Right ventricle myocardium inferior (tissue), 1 donor: ENCODE measurements at regions of chr1 and their contacts with region 1.

Region 1: DNA sequence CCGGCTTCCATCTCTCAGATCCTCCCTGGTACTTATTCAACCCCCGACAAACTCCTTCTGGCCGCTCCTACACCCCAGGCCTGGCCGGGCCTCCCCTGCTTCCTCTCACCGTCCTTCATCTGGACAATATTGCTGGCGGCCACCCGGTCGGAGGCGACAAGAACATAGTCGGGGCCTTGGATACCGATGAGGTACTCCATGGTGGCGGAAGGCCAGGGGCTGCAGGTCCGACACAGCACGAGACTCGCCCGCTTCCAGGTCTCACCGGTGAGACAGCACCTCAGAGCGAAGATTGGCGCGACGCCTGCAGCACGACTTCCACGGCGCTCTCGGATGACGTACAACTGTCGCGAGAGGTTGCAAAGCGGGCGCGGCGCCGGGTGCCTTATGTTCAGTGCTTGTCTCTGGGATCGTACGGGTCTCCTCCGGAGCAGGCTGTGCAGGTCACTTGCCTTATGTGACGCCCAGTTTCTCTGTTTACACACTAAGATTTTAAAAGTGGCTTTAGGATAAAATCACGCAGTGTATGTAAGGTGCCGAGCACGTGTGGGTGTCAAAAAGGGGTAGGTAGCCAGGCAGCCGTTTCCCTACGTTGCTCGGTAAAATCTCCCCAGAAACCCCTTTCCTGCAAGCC is at the start of gene PSMB2:
- DNase-seq: peak; percentile 97
- ATAC-seq: peak; percentile 95
- total RNA-seq, gene PSMB2: 38.1 TPM

Region 2: DNA sequence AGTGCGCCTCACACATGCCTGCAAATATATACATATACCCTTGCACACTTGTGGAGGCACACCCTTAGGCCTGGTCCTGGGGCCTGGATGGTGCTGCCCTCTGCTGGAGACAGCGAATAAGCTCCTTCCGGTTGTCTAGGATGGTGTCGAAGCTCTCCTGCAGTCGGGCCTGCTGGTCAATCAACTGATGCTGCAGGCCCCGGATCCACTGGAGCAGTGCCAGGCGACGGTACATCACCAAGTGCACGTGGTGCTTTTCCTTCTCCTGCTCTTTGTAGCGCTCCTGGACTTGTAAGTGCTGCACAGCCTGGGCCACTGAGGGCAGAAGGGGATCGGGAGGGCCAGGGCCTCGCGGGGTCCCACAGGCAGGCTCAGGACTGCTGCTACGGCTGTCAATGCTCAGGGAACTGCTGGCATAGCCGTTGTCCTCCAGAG is 74.2 kb after region 1 on chr1:
- intact Hi-C with region 1: loop called (anchors 5 kb)
- DNase-seq: peak; percentile 85
- ATAC-seq: peak; percentile 46

Region 3: GRCh38 chr1:35769188-35769758 is 127.9 kb after region 1 on chr1:
- intact Hi-C with region 1: loop called (anchors 1 kb)
- DNase-seq: peak; percentile 91
- ATAC-seq: peak; percentile 91